ENCODE measurements at regions of chr14 and their contacts with region 1.

Region 1: GRCh38 chr14:74860906-74861733 is 14.8 kb downstream of the PROX2 start:
- DNase-seq: peak; percentile 81
- CTCF ChIP-seq: peak; percentile 86

Region 2: GRCh38 chr14:74571901-74572725 is 289.0 kb before region 1 on chr14:
- CTCF ChIA-PET with region 1: no interaction called
- POLR2A ChIA-PET with region 1: no interaction called
- DNase-seq: no peak
- CTCF ChIP-seq: no peak

Region 3: GRCh38 chr14:74612350-74613021 is 248.6 kb before region 1 on chr14:
- CTCF ChIA-PET with region 1: interaction called, 12 read pairs
- POLR2A ChIA-PET with region 1: no interaction called
- DNase-seq: peak; percentile 87
- CTCF ChIP-seq: peak; percentile 83

Region 4: GRCh38 chr14:74881431-74882361 is 20.6 kb after region 1 on chr14 and contains the start of gene DLST:
- CTCF ChIA-PET with region 1: interaction called, 353 read pairs
- POLR2A ChIA-PET with region 1: interaction called, 3 read pairs
- DNase-seq: peak; percentile 97
- CTCF ChIP-seq: no peak

Region 5: GRCh38 chr14:74905375-74906142 is 44.4 kb after region 1 on chr14:
- CTCF ChIA-PET with region 1: interaction called, 542 read pairs
- POLR2A ChIA-PET with region 1: interaction called, 3 read pairs
- DNase-seq: peak; percentile 82
- CTCF ChIP-seq: peak; percentile 88

Region 6: DNA sequence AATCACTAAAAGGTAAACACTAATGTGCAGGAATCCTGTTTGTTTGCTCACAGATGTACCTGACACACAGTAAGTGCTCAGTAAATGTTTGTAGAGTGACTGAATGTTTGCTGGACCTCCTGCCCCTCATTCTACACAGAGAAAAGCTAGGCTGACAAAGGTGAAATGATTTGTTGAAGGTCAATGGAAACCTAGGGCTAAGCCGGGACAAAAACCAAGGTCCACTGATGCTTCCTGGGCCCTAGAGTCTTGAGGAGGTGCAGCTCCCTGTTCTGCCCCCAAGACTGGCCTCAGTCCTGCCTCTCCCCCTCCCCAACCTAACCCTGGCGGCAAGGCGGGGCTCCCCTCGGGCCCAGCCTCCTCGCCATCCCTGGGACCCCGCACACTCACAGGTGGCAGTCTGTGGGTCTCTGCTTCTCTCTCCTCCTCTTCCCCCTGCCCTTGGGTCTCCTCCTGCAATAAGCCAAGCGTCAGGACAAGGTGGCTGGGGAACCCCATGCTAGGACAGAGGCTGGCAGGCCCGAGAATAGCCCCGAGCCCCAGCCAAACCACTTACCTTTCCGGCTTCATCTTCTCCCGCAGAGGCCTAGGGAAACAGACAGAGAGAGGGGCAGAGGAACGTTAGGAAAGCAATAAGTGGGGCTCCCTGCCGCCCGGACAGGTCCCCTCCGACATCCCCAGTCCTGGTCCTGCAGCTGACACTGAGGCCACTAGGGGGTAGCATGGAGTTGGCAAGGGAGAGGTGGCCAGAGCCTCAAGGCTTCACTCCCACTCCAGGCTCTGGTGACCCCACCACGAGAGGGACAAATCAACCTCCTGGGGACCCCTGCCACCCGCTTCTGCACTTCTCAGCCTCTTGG is 84.9 kb after region 1 on chr14:
- CTCF ChIA-PET with region 1: interaction called, 21 read pairs
- POLR2A ChIA-PET with region 1: no interaction called
- DNase-seq: peak; percentile 91
- CTCF ChIP-seq: peak; percentile 98

Region 7: GRCh38 chr14:75301666-75302325 is 440.7 kb after region 1 on chr14:
- CTCF ChIA-PET with region 1: interaction called, 11 read pairs
- POLR2A ChIA-PET with region 1: no interaction called
- DNase-seq: no peak
- CTCF ChIP-seq: no peak

Measured in GM10248 (cell line).